Activated B cell treated with CpG ODN at 0.5 μM for 24 hours (primary cell): ENCODE measurements at regions of chr7 and their contacts with region 1.

Region 1: DNA sequence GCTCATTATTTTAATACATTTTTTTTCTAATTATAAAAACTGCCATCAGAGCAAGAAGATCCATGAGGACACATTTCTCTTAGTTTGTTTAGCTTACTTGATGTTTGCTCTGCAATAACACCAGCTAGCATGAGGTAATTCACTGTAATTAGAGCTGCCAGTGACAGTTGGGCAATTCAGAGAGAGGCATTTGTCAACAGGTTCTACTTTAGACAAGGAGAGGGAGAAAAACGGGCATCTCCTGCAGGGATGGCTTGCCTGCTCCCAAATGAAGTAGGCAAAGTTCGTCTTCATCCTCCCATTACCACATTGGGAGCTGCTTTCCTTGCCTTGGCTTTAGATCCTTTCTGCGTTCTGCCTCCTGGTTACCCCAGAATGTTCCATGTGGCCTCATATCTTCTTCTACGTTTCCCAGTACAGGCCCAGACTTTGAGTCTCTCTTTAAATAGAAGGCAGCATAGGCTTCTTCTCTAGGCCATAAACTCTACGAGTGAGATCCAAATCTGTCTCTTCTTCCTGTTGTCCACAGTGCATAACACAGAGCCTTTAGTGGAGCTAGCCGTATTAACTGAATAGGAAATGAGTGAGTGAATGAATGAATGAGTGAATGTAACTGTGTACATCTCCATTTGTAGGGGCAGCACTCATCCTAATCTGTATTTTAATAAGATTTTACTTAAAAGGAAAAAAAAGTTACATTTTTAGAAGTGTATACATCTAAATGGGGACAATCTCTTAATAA is 21.2 kb downstream of the ASB15 start:
- DNase-seq: no peak
- ATAC-seq: no peak
- H3K4me3 Mint-ChIP-seq: no peak overlapping the region
- H3K27ac Mint-ChIP-seq: no peak overlapping the region
- H3K4me1 Mint-ChIP-seq: no peaks in the 10 kb centered on the region
- H3K27me3 Mint-ChIP-seq: peaks cover 5% of the 10 kb centered on the region
- CTCF ChIP-seq: no peak

Region 2: DNA sequence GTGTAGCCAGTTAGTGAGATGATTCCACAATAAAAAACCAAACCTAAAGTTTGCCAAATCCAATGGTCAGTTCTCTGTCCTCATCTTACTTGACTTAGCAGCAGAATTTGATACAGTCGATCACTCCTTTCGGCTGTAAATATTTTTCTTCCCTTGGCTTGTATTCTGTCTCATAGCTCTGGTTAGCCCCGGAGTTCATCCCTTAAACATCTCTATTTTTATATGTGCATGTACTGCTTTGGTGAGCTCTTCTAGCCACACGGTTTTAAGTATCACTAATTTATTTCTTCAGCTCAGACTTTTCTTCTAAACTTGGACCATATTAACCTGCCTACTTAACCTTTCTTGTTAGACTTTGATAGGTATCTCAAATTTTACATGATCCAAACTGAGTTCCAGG is 39.0 kb before region 1 on chr7:
- CTCF ChIA-PET with region 1: no interaction called
- POLR2A ChIA-PET with region 1: interaction called, 14 read pairs
- intact Hi-C with region 1: no loop called
- DNase-seq: no peak
- ATAC-seq: no peak
- H3K4me3 Mint-ChIP-seq: no peak overlapping the region
- H3K27ac Mint-ChIP-seq: no peak overlapping the region
- H3K4me1 Mint-ChIP-seq: no peaks in the 10 kb centered on the region
- H3K27me3 Mint-ChIP-seq: peaks cover 25% of the 10 kb centered on the region
- CTCF ChIP-seq: no peak

Region 3: GRCh38 chr7:124246262-124246863 is 623.5 kb after region 1 on chr7:
- CTCF ChIA-PET with region 1: no interaction called
- POLR2A ChIA-PET with region 1: no interaction called
- intact Hi-C with region 1: no loop called
- DNase-seq: no peak
- ATAC-seq: no peak
- H3K4me3 Mint-ChIP-seq: no peak overlapping the region
- H3K27ac Mint-ChIP-seq: no peak overlapping the region
- H3K4me1 Mint-ChIP-seq: no peaks in the 10 kb centered on the region
- H3K27me3 Mint-ChIP-seq: no peaks in the 10 kb centered on the region
- CTCF ChIP-seq: no peak

Region 4: GRCh38 chr7:124480036-124480820 is 857.4 kb after region 1 on chr7:
- CTCF ChIA-PET with region 1: no interaction called
- POLR2A ChIA-PET with region 1: no interaction called
- intact Hi-C with region 1: no loop called
- DNase-seq: no peak
- ATAC-seq: no peak
- H3K4me3 Mint-ChIP-seq: no peak overlapping the region
- H3K27ac Mint-ChIP-seq: no peak overlapping the region
- H3K4me1 Mint-ChIP-seq: no peaks in the 10 kb centered on the region
- H3K27me3 Mint-ChIP-seq: no peaks in the 10 kb centered on the region
- CTCF ChIP-seq: no peak